ENCODE measurements at regions of chr7 and their contacts with region 1.

Region 1: GRCh38 chr7:120950539-120951308 is at the start of gene ING3:
- DNase-seq: peak; percentile 94 to 99
- H3K4me3 ChIP-seq: peak within 1 kb of the TSS; percentile 73 to 77
- H3K27ac ChIP-seq: peak within 1 kb of the TSS; percentile 91 to 99
- H3K4me1 ChIP-seq: peaks cover 5 to 12% of the 10 kb centered on the region in 2 donors
- H3K27me3 ChIP-seq: no peaks in the 10 kb centered on the region
- CTCF ChIP-seq: no peak
- total RNA-seq, gene ING3: 6.8 TPM

Region 2: GRCh38 chr7:120996333-120996987 is 45.7 kb after region 1 on chr7:
- intact Hi-C with region 1: no loop called
- DNase-seq: peak; percentile 48 to 88
- H3K4me3 ChIP-seq: no peak overlapping the region
- H3K27ac ChIP-seq: peak overlapping the region; percentile 83 to 88
- H3K4me1 ChIP-seq: peaks cover 5 to 33% of the 10 kb centered on the region in 2 donors
- H3K27me3 ChIP-seq: no peaks in the 10 kb centered on the region
- CTCF ChIP-seq: no peak

Region 3: DNA sequence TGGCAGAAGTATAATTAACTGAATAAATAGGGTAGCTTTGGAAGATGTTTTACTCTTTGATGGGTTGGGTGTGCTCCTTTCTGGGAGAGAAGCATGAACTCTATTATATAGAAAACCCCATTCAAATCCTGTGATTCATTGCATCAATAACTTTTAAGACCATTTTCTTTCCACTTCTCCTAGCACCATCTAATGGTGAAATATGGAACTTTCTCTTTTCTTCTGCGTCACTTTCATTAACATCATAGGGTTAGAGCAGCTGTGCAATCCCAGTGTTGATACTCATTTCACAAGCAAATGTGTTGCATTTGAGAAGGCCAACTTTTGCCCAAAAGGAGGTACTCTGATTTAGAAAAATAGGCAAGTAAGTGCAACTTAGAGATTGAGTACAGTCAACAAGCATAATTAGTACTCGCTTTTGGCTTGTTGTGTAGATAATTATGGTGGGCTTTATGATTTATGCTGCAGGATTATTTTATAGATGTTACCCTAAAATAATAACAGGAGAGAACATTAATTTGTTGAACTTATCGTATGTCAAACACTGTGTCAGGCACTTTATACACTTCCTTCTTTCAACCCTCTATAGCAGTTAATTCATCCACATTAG is 130.7 kb after region 1 on chr7:
- intact Hi-C with region 1: loop called (anchors 1 kb)
- DNase-seq: no peak
- H3K4me3 ChIP-seq: no peak overlapping the region
- H3K27ac ChIP-seq: peak overlapping the region in 1 of 2 donors; percentile 28
- H3K4me1 ChIP-seq: peaks cover 6 to 69% of the 10 kb centered on the region in 2 donors
- H3K27me3 ChIP-seq: no peaks in the 10 kb centered on the region
- CTCF ChIP-seq: peak; percentile 62 to 82 (median 80)

Region 4: DNA sequence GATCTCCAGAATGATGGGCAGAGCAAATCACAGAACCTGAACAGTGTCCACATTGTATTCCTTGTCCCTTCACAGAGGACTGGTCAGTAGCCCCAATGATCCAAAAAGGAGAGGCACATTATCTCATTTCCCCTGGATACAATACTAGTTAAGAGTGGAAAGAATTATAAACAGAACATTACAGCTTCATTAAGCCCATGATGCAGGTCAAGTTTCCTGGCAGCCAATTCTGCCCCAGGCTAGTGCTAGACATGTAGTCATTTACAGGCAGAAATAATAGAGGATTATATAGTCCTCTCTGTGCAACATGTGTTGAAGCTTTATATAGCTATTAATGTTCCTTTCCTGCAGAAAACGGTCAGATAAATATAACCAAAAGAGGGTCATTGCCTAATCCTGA is 253.8 kb after region 1 on chr7:
- intact Hi-C with region 1: no loop called
- DNase-seq: no peak
- H3K4me3 ChIP-seq: no peak overlapping the region
- H3K27ac ChIP-seq: no peak overlapping the region
- H3K4me1 ChIP-seq: no peaks in the 10 kb centered on the region
- H3K27me3 ChIP-seq: no peaks in the 10 kb centered on the region
- CTCF ChIP-seq: no peak

Region 5: GRCh38 chr7:121395961-121396757 is 445.4 kb after region 1 on chr7 and contains the start of gene FAM3C:
- intact Hi-C with region 1: loop called (anchors 2 kb)
- DNase-seq: peak; percentile 75 to 95
- H3K4me3 ChIP-seq: peak within 1 kb of the TSS; percentile 93 to 100
- H3K27ac ChIP-seq: peak within 1 kb of the TSS; percentile 85 to 91
- H3K4me1 ChIP-seq: no peaks in the 10 kb centered on the region
- H3K27me3 ChIP-seq: no peaks in the 10 kb centered on the region
- CTCF ChIP-seq: peak; percentile 83 to 96 (median 92)
- total RNA-seq, gene FAM3C: 27.6 TPM

Measured in ascending aorta (tissue), 2 donors.